Ovary (tissue), 10 donors: ENCODE measurements at regions of chr12 and their contacts with region 1.

Region 1: GRCh38 chr12:116303929-116304328 is 26.4 kb upstream of the MED13L start:
- DNase-seq: peak in 2 of 5 donors; percentile 28 to 55
- H3K4me3 ChIP-seq: no peak overlapping the region
- H3K27ac ChIP-seq: no peak overlapping the region
- H3K4me1 ChIP-seq: peaks cover 12% of the 10 kb centered on the region
- H3K27me3 ChIP-seq: no peaks in the 10 kb centered on the region
- CTCF ChIP-seq: no peak
- EP300 ChIP-seq: no peak
- POLR2A ChIP-seq: no peak

Region 2: GRCh38 chr12:116533343-116534251 is 229.7 kb after region 1 on chr12:
- intact Hi-C with region 1: loop called in 1 of 4 experiments (anchors 10 kb)
- DNase-seq: peak; percentile 87 to 94 (median 90)
- H3K4me3 ChIP-seq: peak overlapping the region; percentile 67
- H3K27ac ChIP-seq: peak overlapping the region; percentile 71 to 79
- H3K4me1 ChIP-seq: peaks cover 6% of the 10 kb centered on the region
- H3K27me3 ChIP-seq: no peaks in the 10 kb centered on the region
- CTCF ChIP-seq: no peak
- EP300 ChIP-seq: no peak
- POLR2A ChIP-seq: peak; percentile 59